ENCODE measurements at regions of chr12 and their contacts with region 1.

Region 1: GRCh38 chr12:73935817-73936216 is 601.8 kb upstream of the ATXN7L3B start:
- DNase-seq: peak; percentile 2
- H3K4me3 ChIP-seq: no peak overlapping the region
- H3K27ac ChIP-seq: no peak overlapping the region
- H3K4me1 ChIP-seq: no peaks in the 10 kb centered on the region
- H3K27me3 ChIP-seq: no peaks in the 10 kb centered on the region
- CTCF ChIP-seq: peak; percentile 32 to 63

Region 2: DNA sequence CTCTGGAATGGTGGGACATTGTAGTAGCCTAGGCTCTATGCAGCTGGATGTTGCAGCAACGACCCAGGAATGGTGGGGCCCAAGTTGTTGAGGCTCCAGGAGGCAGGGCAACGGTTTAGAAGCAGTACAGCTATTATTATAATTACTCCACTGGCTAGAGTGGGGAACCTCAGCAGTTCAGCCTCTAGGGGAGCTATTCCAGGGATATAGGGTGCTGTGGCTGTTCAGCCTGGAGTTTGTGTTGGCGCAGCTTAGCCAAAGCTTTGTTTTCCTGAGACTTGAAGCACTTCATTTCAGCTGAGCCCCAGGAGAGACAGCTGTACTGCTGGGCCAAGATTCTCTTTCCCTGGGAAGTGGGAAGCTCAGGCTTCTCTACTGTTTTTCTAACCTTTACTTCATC is 421.1 kb before region 1 on chr12:
- CTCF ChIA-PET with region 1: no interaction called
- dilution Hi-C with region 1: no loop called
- in situ Hi-C with region 1: no loop called
- intact Hi-C with region 1: no loop called
- DNase-seq: no peak
- H3K4me3 ChIP-seq: no peak overlapping the region
- H3K27ac ChIP-seq: no peak overlapping the region
- H3K4me1 ChIP-seq: no peaks in the 10 kb centered on the region
- H3K27me3 ChIP-seq: no peaks in the 10 kb centered on the region
- CTCF ChIP-seq: peak in 1 of 2 donors; percentile 7

Region 3: DNA sequence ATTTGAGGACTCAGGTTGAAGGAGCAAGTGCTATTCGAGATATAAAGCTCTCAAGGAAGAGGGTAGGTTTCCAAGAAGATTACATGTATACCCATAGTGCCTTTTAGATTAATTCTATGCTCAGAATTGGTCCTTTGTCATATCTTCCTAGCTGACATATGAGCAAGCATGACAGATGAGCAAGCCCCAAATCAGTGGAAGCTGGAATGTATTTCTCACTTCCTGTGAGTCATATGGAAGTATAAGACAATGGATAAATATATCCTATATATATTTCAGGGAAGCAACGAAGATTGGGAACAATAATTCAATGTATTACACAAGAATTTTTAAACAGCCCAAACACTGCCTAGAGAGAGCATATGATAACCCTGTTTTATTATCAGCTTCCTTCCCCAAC is 72.3 kb before region 1 on chr12:
- CTCF ChIA-PET with region 1: no interaction called
- dilution Hi-C with region 1: no loop called
- in situ Hi-C with region 1: no loop called
- intact Hi-C with region 1: no loop called
- DNase-seq: peak; percentile 59
- H3K4me3 ChIP-seq: no peak overlapping the region
- H3K27ac ChIP-seq: peak overlapping the region; percentile 42
- H3K4me1 ChIP-seq: peaks cover 10% of the 10 kb centered on the region
- H3K27me3 ChIP-seq: no peaks in the 10 kb centered on the region
- CTCF ChIP-seq: no peak

Region 4: GRCh38 chr12:73998894-73999293 is 63.1 kb after region 1 on chr12:
- CTCF ChIA-PET with region 1: no interaction called
- dilution Hi-C with region 1: no loop called
- in situ Hi-C with region 1: no loop called
- intact Hi-C with region 1: loop called (anchors 10 kb)
- DNase-seq: no peak
- H3K4me3 ChIP-seq: no peak overlapping the region
- H3K27ac ChIP-seq: no peak overlapping the region
- H3K4me1 ChIP-seq: no peaks in the 10 kb centered on the region
- H3K27me3 ChIP-seq: no peaks in the 10 kb centered on the region
- CTCF ChIP-seq: no peak

Region 5: GRCh38 chr12:74365178-74365964 is 429.6 kb after region 1 on chr12:
- CTCF ChIA-PET with region 1: no interaction called
- dilution Hi-C with region 1: no loop called
- in situ Hi-C with region 1: no loop called
- intact Hi-C with region 1: loop called (anchors 2 kb)
- DNase-seq: peak; percentile 34
- H3K4me3 ChIP-seq: no peak overlapping the region
- H3K27ac ChIP-seq: no peak overlapping the region
- H3K4me1 ChIP-seq: no peaks in the 10 kb centered on the region
- H3K27me3 ChIP-seq: peaks cover 5% of the 10 kb centered on the region
- CTCF ChIP-seq: peak; percentile 74 to 80

Region 6: GRCh38 chr12:74415633-74416032 is 479.8 kb after region 1 on chr12:
- CTCF ChIA-PET with region 1: no interaction called
- dilution Hi-C with region 1: no loop called
- in situ Hi-C with region 1: no loop called
- intact Hi-C with region 1: loop called (anchors 2 kb)
- DNase-seq: peak; percentile 15
- H3K4me3 ChIP-seq: no peak overlapping the region
- H3K27ac ChIP-seq: no peak overlapping the region
- H3K4me1 ChIP-seq: no peaks in the 10 kb centered on the region
- H3K27me3 ChIP-seq: no peaks in the 10 kb centered on the region
- CTCF ChIP-seq: peak; percentile 45 to 64

Region 7: DNA sequence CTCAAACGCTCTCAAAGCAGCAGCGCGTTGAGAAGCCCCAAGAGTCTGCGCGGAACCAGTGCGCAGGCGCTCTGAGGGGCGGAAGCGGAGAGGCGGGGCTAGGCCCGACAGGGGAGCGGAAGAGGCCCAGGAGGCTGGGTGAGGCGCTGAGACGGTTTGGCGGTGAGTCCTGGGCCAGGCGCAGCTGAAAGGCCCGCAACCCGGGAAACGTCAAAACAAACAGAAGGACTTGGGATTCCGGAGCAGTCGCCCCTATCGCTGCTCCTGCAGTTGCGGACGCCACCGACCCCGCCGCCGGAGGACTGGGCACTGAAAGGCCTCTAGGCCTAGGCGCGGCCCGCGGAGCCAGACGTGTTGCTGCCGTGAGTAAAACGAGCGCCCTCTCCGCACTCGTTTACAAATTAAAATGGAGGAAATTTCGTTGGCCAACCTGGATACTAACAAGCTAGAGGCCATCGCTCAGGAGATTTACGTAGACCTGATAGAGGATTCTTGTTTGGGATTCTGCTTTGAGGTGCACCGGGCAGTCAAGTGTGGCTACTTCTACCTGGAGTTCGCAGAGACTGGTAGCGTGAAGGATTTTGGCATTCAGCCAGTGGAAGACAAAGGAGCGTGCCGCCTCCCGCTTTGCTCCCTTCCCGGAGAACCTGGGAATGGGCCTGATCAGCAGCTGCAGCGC is 602.0 kb after region 1 on chr12 and contains the start of gene ATXN7L3B:
- CTCF ChIA-PET with region 1: no interaction called
- dilution Hi-C with region 1: no loop called
- in situ Hi-C with region 1: no loop called
- intact Hi-C with region 1: loop called (anchors 10 kb)
- DNase-seq: peak; percentile 94
- H3K4me3 ChIP-seq: peak within 1 kb of the TSS; percentile 67 to 78 (median 69)
- H3K27ac ChIP-seq: peak within 1 kb of the TSS; percentile 97
- H3K4me1 ChIP-seq: peaks cover 24% of the 10 kb centered on the region
- H3K27me3 ChIP-seq: no peaks in the 10 kb centered on the region
- CTCF ChIP-seq: peak in 1 of 2 donors; percentile 8
- total RNA-seq, gene ATXN7L3B: 22.0 to 22.2 TPM

Region 8: DNA sequence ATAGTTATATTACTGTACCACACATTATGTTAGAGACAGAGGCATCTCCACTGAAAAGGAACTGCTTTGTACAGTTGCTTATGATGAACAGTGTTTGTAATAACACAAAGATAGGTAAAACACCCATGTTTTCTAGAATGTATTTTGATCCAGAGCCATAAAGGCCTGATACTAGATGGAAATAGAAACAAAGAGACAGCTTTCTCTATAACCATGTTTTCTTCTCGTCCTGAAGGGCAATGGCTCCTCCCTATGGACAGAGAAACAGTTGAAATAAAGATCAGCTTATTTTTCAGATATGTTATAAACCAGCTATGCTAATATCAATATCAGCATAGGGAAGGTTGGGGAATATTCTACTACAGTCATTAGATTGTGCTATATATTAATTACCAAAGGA is 711.0 kb after region 1 on chr12:
- CTCF ChIA-PET with region 1: no interaction called
- dilution Hi-C with region 1: no loop called
- in situ Hi-C with region 1: no loop called
- intact Hi-C with region 1: loop called (anchors 5 kb)
- DNase-seq: peak; percentile 30
- H3K4me3 ChIP-seq: no peak overlapping the region
- H3K27ac ChIP-seq: no peak overlapping the region
- H3K4me1 ChIP-seq: no peaks in the 10 kb centered on the region
- H3K27me3 ChIP-seq: peaks cover 2% of the 10 kb centered on the region
- CTCF ChIP-seq: peak; percentile 34 to 62